ENCODE measurements at regions of chr17 and their contacts with region 1.

Region 1: GRCh38 chr17:1047177-1047878 is 50.4 kb downstream of the TIMM22 start:
- DNase-seq: peak in 1 of 2 donors; percentile 93
- H3K4me3 ChIP-seq: peak overlapping the region in 1 of 2 donors; percentile 19
- H3K27ac ChIP-seq: peak overlapping the region; percentile 90 to 93
- H3K4me1 ChIP-seq: peaks cover 23 to 49% of the 10 kb centered on the region in 2 donors
- H3K27me3 ChIP-seq: no peaks in the 10 kb centered on the region
- CTCF ChIP-seq: peak; percentile 30 to 49 (median 49)

Region 2: DNA sequence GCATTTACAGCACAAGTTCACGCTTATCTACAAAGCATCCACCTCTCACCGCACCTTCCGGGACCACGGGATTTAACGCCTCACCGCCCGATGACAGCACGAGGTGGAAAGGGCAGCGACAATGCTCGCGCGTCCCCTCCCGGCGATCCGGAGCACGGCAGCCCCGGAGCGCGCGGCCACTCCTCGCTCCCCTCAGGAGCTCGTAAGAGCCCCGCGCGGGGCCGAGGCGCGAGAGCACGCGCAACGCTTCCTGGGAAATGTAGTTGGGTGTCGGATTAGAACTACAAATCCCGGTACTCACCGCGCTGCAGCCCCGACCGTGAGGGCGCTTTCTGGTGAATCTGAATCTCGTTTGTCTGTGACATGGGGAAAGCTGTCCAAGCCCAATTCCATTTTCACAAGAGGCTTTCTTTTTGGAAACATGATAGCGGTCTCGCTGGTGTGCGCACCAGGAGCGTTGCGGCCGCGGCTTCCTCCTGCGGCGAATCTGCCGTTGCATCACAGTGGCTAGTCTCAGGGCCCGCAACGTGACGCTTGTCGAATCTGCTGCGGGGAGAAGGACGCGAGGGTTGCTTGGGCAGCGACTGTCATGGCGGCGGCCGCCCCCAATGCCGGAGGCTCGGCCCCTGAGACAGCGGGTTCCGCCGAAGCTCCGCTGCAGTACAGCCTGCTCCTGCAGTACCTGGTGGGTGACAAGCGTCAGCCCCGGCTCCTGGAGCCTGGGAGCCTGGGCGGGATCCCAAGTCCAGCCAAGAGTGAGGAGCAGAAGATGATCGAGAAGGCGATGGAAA is 50.6 kb before region 1 on chr17 and contains the start of gene TIMM22:
- intact Hi-C with region 1: loop called (anchors 2 kb)
- DNase-seq: peak; percentile 73 to 95
- H3K4me3 ChIP-seq: peak within 1 kb of the TSS; percentile 83 to 86
- H3K27ac ChIP-seq: peak within 1 kb of the TSS; percentile 68 to 79
- H3K4me1 ChIP-seq: peaks cover 19 to 30% of the 10 kb centered on the region in 2 donors
- H3K27me3 ChIP-seq: no peaks in the 10 kb centered on the region
- CTCF ChIP-seq: peak; percentile 94 to 98 (median 98)
- total RNA-seq, gene TIMM22: 12.1 TPM

Region 3: DNA sequence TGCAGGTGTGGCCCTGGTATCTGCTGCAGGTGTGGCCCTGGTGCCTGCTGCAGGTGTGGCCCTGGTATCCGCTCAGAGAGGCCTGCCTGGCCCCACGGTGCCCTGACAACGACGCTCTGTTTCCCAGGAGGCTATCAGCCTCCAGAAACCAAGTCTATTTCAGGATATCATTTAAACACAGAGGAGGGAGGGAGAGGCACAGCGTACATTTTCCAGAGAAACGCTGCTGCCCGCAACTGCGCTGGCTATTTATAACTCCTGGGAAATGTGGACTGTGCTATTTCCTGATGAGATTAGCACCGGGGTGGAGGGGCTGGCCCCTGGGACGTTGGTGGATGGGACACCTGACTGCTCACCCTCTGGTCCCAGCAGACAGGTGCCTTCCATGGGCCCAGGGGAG is 27.9 kb before region 1 on chr17:
- intact Hi-C with region 1: loop called (anchors 1 kb)
- DNase-seq: peak; percentile 37 to 88
- H3K4me3 ChIP-seq: peak overlapping the region; percentile 16 to 42
- H3K27ac ChIP-seq: peak overlapping the region; percentile 94
- H3K4me1 ChIP-seq: peaks cover 24 to 44% of the 10 kb centered on the region in 2 donors
- H3K27me3 ChIP-seq: no peaks in the 10 kb centered on the region
- CTCF ChIP-seq: no peak

Region 4: DNA sequence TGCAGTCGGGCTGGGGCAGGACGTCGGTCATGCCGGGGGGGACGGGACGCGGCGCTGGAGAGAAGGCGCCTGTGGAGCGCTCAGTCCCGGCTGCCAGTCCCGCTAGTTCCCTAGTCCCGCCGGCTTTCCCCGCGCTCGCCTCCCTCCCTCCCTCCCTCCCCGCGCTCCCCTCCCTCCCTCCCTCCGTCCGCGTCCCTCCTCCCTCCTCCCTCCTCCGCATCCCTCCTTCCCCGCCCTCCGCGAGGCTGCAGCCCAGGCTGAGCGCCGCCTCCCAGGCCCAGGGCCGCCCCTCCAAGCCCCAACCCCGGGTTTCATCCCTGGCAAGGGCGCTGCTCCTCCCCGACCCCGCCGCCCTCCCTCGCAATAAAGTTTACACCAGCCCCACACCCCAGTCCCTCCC is 15.6 kb before region 1 on chr17:
- intact Hi-C with region 1: loop called (anchors 1 kb)
- DNase-seq: peak in 1 of 2 donors; percentile 78
- H3K4me3 ChIP-seq: peak overlapping the region; percentile 51 to 68
- H3K27ac ChIP-seq: peak overlapping the region; percentile 73 to 81
- H3K4me1 ChIP-seq: peaks cover 12 to 41% of the 10 kb centered on the region in 2 donors
- H3K27me3 ChIP-seq: no peaks in the 10 kb centered on the region
- CTCF ChIP-seq: no peak